T-cell (primary cell): ENCODE measurements at regions of chr1 and their contacts with region 1.

Region 1: DNA sequence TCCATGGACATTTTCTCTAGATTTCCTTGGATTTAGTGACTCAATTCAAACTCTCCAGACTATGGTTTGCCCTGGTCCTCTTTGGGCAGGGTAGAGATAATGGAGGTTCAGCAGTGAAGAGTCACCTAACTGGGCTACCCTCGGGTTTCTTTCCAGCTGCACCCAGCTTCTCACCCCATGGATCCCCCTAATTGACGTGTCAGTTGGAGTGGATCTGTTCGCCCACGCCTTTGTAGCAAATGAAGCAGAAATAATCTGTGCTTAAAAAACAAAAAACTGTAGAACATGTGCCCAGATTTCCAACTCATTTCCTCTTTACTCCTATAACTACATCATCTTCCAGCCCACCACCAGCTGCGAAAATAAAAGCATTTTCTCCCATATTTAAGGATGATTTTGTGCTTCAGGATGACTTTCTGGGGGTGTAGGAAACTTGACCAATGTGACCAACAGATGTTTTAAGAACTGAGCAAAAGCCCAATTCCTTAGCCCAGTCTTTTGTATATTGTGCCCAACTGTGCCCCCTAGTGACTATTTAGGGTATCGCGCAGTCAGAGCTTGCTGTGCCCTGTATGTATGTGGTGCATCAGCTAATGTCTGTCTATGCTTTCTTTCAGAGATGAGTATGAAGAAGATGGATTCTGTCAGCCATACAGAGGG is 66.5 kb upstream of the UBE2U start:
- DNase-seq: peak in 34 of 35 experiments; percentile 4 to 76 (median 45)
- ATAC-seq: peak; percentile 47 to 70 (median 66)
- H3K4me3 ChIP-seq: no peak overlapping the region
- H3K4me3 Mint-ChIP-seq: no peak overlapping the region
- H3K27ac ChIP-seq: no peak overlapping the region
- H3K27ac Mint-ChIP-seq: no peak overlapping the region
- H3K4me1 ChIP-seq: no peaks in the 10 kb centered on the region
- H3K4me1 Mint-ChIP-seq: no peaks in the 10 kb centered on the region
- H3K27me3 ChIP-seq: no peaks in the 10 kb centered on the region
- H3K27me3 Mint-ChIP-seq: peaks cover 0 to 3% of the 10 kb centered on the region in 2 donors

Region 2: DNA sequence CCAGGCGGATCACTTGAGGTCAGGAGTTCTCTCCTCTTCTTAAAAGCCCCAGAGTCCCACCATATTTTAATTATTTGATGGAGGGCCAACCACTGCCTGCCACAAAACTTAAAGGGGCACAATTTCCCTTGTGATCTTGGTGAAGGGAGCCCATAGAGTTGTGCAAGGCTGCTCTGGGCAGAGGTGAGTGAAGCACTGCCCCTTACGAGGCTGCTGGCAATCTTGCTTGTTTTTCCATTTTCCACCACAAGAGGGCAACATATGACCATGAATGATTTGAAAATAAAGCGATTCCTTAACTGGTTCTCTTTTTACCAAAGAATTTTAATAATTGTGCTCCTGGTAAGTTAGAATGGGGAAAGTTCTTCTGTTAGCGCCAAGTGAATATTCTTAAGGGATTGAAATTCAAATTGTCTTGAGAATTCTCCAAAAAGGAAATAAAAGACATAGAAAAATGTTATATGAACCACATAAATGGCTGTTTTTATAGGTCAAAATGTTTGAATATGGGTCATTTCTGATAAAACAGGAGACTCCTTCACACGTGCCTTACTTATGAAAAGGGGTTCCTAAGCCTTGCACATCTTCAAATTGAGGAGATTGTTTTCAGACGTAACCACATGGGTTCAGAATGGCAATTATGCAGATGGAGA is 521.0 kb before region 1 on chr1:
- CTCF ChIA-PET with region 1: interaction called, 5 to 16 read pairs
- POLR2A ChIA-PET with region 1: no interaction called
- DNase-seq: peak in 34 of 35 experiments; percentile 3 to 83 (median 28)
- ATAC-seq: peak; percentile 64 to 80 (median 66)
- H3K4me3 ChIP-seq: no peak overlapping the region
- H3K4me3 Mint-ChIP-seq: no peak overlapping the region
- H3K27ac ChIP-seq: no peak overlapping the region
- H3K27ac Mint-ChIP-seq: no peak overlapping the region
- H3K4me1 ChIP-seq: no peaks in the 10 kb centered on the region
- H3K4me1 Mint-ChIP-seq: peaks cover 2 to 7% (median 4%) of the 10 kb centered on the region in 3 donors
- H3K27me3 ChIP-seq: no peaks in the 10 kb centered on the region
- H3K27me3 Mint-ChIP-seq: no peaks in the 10 kb centered on the region

Region 3: DNA sequence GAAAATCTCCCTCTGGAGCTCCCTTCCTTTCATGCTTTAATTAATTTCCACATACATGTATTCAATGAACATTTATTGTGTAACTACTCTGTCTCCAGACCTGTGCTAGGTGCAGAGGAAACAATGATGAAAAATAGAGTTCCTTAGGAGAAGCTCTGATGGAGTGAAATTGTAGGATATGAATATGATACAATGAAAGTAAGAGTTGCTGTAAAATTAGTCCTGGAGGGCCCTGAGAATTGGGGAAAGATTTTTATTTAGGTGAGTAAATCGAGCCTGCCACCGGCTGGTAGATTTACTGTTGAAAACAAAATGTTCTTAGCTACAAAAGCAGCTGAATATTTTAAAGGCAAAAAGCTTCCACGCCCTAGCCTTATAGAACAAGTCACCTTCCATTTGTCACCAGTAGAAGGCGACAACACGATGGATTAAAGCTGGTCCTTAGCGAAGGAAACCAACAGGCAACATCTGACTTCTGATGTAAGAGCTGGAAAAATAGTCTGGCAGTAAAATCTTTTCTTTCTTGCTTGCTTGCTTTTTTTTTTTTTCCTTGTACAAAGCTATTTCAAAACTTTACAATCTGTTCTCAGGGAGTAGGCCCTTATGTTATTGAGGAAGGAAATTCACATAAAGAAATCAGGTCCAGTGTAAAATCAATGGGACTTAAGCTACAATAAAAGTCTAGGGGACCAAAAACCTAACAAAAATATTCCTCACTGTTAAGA is 445.0 kb before region 1 on chr1:
- CTCF ChIA-PET with region 1: interaction called, 4 to 11 read pairs
- POLR2A ChIA-PET with region 1: no interaction called
- DNase-seq: peak in 11 of 35 experiments; percentile 2 to 53 (median 5)
- ATAC-seq: peak in 2 of 4 experiments; percentile 53 to 61
- H3K4me3 ChIP-seq: no peak overlapping the region
- H3K4me3 Mint-ChIP-seq: no peak overlapping the region
- H3K27ac ChIP-seq: no peak overlapping the region
- H3K27ac Mint-ChIP-seq: no peak overlapping the region
- H3K4me1 ChIP-seq: no peaks in the 10 kb centered on the region
- H3K4me1 Mint-ChIP-seq: peaks cover 0 to 6% (median 1%) of the 10 kb centered on the region in 3 donors
- H3K27me3 ChIP-seq: peaks cover 0 to 5% of the 10 kb centered on the region in 2 experiments
- H3K27me3 Mint-ChIP-seq: peaks cover 0 to 2% of the 10 kb centered on the region in 2 donors

Region 4: DNA sequence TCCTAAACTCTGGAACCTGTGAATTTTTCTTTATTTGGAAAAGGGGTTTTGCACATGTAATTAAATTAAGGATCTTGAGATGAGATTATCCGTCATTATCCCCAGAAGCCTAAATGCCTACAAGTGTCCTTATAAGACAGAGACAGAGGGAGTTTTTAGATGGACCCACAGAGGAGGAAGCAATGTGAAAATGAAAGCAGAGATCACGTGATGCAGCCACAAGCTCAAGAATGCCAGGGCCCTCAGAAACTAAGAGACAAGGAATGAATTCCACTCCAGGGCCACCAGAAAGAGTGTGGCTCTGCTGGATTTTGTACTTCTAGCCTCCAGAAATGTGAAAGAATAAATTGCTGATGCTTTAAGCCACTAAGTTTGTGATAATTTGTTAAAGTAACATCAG is 117.1 kb before region 1 on chr1:
- CTCF ChIA-PET with region 1: no interaction called
- POLR2A ChIA-PET with region 1: no interaction called
- DNase-seq: peak in 4 of 35 experiments; percentile 1 to 36 (median 4)
- ATAC-seq: no peak
- H3K4me3 ChIP-seq: no peak overlapping the region
- H3K4me3 Mint-ChIP-seq: peak overlapping the region in 2 of 3 donors; percentile 1 to 41
- H3K27ac ChIP-seq: no peak overlapping the region
- H3K27ac Mint-ChIP-seq: peak overlapping the region in 1 of 2 donors; percentile 17
- H3K4me1 ChIP-seq: peaks cover 3 to 20% of the 10 kb centered on the region in 2 experiments
- H3K4me1 Mint-ChIP-seq: peaks cover 14 to 16% (median 15%) of the 10 kb centered on the region in 3 donors
- H3K27me3 ChIP-seq: no peaks in the 10 kb centered on the region
- H3K27me3 Mint-ChIP-seq: no peaks in the 10 kb centered on the region

Region 5: DNA sequence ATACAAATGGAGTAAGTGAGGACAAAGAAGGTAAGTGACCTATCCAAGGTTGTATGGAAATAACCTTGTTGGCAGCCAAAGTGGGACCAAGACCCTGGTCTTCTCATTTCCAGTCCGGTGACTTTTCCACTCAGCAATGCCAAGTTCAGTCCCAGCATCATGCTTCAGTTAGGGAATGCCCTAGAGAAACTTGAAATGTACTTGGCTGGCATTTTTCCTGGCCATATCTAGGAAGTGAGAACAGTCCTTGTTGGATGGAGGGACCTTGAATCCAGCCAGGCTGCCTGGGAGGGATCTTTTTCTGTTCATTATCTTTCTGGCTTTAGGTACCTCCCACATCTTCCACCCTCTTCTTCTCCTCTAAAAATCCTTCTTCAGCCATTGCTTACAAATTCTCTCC is 10.3 kb before region 1 on chr1:
- CTCF ChIA-PET with region 1: no interaction called
- POLR2A ChIA-PET with region 1: no interaction called
- DNase-seq: no peak
- ATAC-seq: no peak
- H3K4me3 ChIP-seq: no peak overlapping the region
- H3K4me3 Mint-ChIP-seq: no peak overlapping the region
- H3K27ac ChIP-seq: no peak overlapping the region
- H3K27ac Mint-ChIP-seq: no peak overlapping the region
- H3K4me1 ChIP-seq: no peaks in the 10 kb centered on the region
- H3K4me1 Mint-ChIP-seq: no peaks in the 10 kb centered on the region
- H3K27me3 ChIP-seq: no peaks in the 10 kb centered on the region
- H3K27me3 Mint-ChIP-seq: peaks cover 14 to 16% of the 10 kb centered on the region in 2 donors